Cardiac septum (tissue), 1 donor: ENCODE measurements at regions of chr12 and their contacts with region 1.

Region 1: DNA sequence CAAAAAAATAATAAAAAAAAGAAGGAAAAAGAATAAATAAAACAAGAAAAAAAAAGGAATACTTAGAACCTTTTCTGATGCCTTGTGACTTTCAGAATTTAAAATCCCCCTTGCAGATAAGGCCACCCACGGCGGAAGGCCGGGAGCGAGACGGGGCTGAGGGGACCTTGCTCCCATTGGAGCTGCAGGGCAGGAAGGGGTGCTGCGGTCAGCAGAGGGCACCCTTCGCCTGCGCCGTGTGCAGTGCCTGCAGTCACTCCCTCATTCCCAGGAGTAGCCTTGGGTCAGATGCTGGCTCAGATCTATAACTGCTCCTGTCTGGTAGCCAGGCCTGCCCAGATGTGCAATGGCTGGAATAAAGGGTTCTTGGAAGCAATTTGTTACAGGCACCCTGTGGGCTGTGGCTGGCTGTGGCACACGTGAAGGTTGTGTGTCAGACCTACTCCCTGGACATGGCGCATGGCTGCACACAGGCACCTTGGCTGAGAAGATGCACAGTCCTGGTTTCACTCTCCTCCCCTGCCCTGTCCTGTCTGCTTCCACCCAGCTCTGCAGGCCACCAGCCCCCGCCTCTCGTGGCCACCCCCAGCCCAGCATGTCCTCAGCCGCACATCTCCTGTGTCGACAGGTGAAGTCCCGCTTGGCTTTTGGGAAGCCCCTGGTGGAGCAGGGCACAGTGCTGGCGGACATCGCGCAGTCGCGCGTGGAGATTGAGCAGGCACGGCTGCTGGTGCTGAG is 13.4 kb upstream of the ALDH2 start:
- DNase-seq: peak; percentile 82

Region 2: GRCh38 chr12:111788178-111788654 is 34.9 kb after region 1 on chr12:
- intact Hi-C with region 1: loop called (anchors 1 kb)
- DNase-seq: no peak

Region 3: DNA sequence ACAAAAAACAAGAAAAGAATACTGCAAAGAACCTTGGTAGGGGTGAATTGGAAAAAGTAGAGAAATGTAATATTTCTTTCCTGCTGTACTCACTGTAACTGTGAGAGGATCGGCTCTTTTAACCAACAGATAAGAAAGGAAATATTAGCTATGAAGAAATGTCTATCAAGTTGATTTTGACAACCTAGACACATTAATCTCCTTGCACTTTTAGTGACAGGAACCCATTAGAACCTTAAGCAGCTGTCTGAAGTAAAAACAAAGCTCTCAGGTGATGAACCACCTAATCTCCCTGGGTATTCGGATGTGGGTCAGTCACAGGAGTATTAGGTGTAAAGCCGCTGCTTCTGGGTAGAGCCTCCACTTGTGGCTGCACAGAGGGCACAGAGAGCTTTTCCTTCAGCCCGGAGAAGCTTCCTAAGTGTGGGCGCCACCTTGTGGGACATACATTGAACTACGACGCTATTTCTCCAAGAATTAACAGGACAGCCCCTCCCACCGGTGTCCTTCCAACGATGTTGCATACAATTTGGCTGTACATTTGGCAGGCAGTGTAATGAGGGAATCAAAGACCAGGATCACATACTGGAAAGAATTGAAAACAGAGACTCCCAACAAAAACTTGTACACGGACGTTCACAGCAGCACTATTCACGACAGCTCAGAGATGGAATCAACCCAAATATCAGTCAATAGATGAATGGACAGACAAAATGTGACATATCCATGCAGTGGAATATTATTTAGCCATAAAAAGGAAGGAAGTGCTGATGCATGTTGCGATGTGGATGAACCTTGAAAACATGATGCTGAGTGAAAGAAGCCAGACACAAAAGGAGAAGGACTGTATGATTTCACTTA is 59.8 kb after region 1 on chr12:
- intact Hi-C with region 1: loop called (anchors 2 kb)
- DNase-seq: peak; percentile 86